Calu3 (cell line): ENCODE measurements at regions of chr9 and their contacts with region 1.

Region 1: DNA sequence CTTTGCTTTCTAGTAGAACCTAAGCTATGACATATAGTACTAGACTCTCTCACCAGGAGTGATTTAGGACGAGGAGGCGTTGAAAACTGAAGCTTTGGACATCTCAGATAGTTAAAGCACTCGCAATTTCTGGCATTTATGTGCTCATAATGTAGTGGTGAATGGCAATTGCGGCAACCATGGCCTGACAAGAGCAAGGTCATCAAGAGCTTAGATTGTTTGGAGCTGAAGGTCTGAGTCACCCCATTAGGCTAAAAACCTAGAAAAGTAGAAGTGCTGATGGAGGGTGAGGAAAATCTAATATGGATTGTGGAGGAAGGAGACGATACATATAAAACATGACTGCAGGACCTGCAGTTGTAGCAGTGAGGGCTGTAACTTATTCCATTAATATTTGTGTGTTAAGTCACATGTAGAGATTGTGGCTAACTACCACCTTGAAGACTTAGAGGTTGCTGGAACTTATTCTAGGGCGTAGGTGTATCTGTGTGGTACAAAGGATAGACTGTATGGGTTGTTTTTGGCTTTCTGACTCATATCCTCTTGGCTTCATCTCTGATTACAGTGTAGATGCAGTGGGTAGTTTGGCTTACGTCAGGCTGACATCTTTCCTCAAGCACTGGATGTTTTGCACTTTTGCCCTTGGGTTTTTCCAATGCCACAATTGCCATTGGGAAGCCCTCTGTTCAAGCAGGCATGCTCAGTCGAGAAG is 138.9 kb upstream of the CDKN2B start:
- DNase-seq: peak; percentile 41
- H3K4me3 Mint-ChIP-seq: no peak overlapping the region
- H3K27ac Mint-ChIP-seq: peak overlapping the region; percentile 96
- H3K4me1 Mint-ChIP-seq: peaks cover 50% of the 10 kb centered on the region
- H3K27me3 Mint-ChIP-seq: no peaks in the 10 kb centered on the region
- CTCF ChIP-seq: no peak

Region 2: DNA sequence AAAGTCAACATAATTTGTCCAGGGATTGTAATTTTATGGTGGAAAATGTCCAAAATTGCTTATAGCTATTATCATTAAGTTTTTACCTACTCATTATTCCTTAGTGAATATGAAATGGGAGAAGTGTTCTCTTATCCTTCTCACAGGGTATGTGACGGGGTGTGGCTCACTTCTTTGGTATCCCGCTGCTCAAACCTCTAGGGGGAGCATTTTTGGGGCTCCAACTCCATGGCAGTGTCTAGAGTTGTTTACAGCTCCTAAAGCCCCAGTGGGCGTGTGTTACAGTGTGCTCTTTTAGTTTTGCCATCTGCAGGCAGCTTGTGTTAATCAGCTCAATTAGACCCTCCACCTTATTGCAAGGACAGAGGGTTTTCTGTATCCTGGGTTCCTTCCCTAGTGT is 243.2 kb before region 1 on chr9:
- CTCF ChIA-PET with region 1: no interaction called
- intact Hi-C with region 1: no loop called
- DNase-seq: no peak
- H3K4me3 Mint-ChIP-seq: no peak overlapping the region
- H3K27ac Mint-ChIP-seq: no peak overlapping the region
- H3K4me1 Mint-ChIP-seq: no peaks in the 10 kb centered on the region
- H3K27me3 Mint-ChIP-seq: no peaks in the 10 kb centered on the region
- CTCF ChIP-seq: no peak

Region 3: GRCh38 chr9:22079873-22080341 is 68.1 kb before region 1 on chr9:
- CTCF ChIA-PET with region 1: no interaction called
- intact Hi-C with region 1: loop called (anchors 10 kb)
- DNase-seq: peak; percentile 11
- H3K4me3 Mint-ChIP-seq: no peak overlapping the region
- H3K27ac Mint-ChIP-seq: no peak overlapping the region
- H3K4me1 Mint-ChIP-seq: peaks cover 35% of the 10 kb centered on the region
- H3K27me3 Mint-ChIP-seq: no peaks in the 10 kb centered on the region
- CTCF ChIP-seq: no peak

Region 4: GRCh38 chr9:22228542-22228941 is 80.6 kb after region 1 on chr9:
- CTCF ChIA-PET with region 1: no interaction called
- intact Hi-C with region 1: no loop called
- DNase-seq: no peak
- H3K4me3 Mint-ChIP-seq: no peak overlapping the region
- H3K27ac Mint-ChIP-seq: no peak overlapping the region
- H3K4me1 Mint-ChIP-seq: peaks cover 9% of the 10 kb centered on the region
- H3K27me3 Mint-ChIP-seq: no peaks in the 10 kb centered on the region
- CTCF ChIP-seq: no peak